Activated CD4-positive, alpha-beta T cell treated with anti-CD3 and anti-CD28 coated beads, Interleukin-2, amount 10 ng/mL, durations not matched to agents 24 days and 14 days (primary cell): ENCODE measurements at regions of chr1 and their contacts with region 1.

Region 1: DNA sequence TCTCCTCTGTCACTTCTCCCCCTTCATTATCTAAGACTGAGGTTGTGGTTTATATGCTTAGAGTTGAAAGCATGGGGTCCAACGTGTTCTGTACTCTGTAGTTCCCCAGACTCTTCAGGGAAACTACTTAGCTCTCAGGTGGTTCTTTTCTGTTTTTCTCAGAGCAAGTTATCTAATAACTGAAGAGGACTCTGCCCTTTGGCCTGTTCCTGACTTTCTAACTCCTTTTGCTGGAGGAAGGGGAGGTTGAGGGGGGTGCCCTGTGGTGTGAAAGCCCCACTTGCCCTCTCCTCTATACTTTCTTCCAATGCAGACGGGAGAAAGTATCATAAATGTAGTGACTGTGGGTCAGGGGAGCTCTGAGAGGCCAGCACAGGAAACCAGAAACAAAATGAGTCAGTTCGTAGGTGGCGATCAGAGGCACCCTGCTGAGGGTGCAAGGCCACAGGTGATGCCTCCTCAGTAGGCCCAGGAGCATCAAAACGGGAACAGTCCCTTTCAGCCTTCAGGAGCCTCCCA is 5.0 kb downstream of the SLC25A44 start:
- DNase-seq: peak; percentile 74
- H3K4me3 Mint-ChIP-seq: no peak overlapping the region
- H3K27ac Mint-ChIP-seq: peak overlapping the region; percentile 97
- H3K4me1 Mint-ChIP-seq: peaks cover 54% of the 10 kb centered on the region
- H3K27me3 Mint-ChIP-seq: no peaks in the 10 kb centered on the region

Region 2: DNA sequence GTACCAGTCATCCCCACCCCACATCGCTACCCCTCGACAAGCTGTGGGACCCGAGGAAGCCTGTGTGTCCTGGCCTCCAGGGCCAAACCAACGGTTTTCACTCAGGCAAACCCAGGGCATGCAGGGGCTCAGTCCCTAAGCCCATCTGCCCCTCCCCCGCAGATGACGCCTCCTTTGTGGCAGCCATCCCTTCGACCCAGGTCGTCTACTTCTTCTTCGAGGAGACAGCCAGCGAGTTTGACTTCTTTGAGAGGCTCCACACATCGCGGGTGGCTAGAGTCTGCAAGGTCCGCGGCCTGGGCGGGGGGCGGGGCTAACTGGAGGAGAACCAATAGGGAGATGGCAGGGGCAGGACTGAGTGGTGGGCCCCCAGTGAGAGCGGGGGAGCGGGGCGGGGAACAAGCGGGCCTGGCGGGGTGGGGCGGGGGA is 38.1 kb before region 1 on chr1:
- intact Hi-C with region 1: loop called (anchors 5 kb)
- DNase-seq: peak; percentile 86
- H3K4me3 Mint-ChIP-seq: peak overlapping the region; percentile 73
- H3K27ac Mint-ChIP-seq: peak overlapping the region; percentile 79
- H3K4me1 Mint-ChIP-seq: peaks cover 50% of the 10 kb centered on the region
- H3K27me3 Mint-ChIP-seq: no peaks in the 10 kb centered on the region

Region 3: GRCh38 chr1:156212833-156213643 is 14.1 kb after region 1 on chr1 and contains the start of gene PMF1:
- intact Hi-C with region 1: loop called (anchors 2 kb)
- DNase-seq: peak; percentile 98
- H3K4me3 Mint-ChIP-seq: peak within 1 kb of the TSS; percentile 98
- H3K27ac Mint-ChIP-seq: peak within 1 kb of the TSS; percentile 99
- H3K4me1 Mint-ChIP-seq: peaks cover 38% of the 10 kb centered on the region
- H3K27me3 Mint-ChIP-seq: no peaks in the 10 kb centered on the region
- total RNA-seq, gene PMF1: 107 and 113 TPM in 2 replicates

Region 4: DNA sequence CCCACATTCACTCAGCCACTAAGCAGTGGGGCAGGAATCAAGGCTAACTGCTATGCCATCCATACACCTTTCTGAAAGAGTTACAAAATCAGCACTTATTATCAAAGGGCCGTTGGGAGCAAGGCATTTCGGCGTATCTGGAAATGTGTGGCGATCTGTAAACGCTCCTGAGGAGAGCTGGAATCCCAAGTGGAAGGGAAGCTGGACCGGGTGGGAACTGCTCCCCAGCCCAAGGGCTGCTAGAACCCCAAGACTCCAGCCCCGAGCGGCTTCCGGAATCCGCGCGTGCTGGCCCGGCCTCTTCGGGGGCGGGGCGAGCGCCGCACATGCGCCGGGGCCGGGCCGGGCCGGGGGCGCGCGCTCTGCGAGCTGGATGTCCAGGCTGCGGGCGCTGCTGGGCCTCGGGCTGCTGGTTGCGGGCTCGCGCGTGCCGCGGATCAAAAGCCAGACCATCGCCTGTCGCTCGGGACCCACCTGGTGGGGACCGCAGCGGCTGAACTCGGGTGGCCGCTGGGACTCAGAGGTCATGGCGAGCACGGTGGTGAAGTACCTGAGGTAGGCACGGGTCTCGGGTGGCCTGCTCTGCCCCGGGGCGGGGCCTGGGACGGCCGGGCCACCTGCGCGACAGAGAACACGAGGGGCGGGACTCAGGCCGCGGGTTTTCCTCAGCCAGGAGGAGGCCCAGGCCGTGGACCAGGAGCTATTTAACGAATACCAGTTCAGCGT is 392.7 kb after region 1 on chr1 and contains the start of gene NAXE:
- intact Hi-C with region 1: no loop called
- DNase-seq: peak; percentile 94
- H3K4me3 Mint-ChIP-seq: peak within 1 kb of the TSS; percentile 86
- H3K27ac Mint-ChIP-seq: peak within 1 kb of the TSS; percentile 85
- H3K4me1 Mint-ChIP-seq: peaks cover 19% of the 10 kb centered on the region
- H3K27me3 Mint-ChIP-seq: no peaks in the 10 kb centered on the region
- total RNA-seq, gene NAXE: 84.1 and 90.2 TPM in 2 replicates

Region 5: DNA sequence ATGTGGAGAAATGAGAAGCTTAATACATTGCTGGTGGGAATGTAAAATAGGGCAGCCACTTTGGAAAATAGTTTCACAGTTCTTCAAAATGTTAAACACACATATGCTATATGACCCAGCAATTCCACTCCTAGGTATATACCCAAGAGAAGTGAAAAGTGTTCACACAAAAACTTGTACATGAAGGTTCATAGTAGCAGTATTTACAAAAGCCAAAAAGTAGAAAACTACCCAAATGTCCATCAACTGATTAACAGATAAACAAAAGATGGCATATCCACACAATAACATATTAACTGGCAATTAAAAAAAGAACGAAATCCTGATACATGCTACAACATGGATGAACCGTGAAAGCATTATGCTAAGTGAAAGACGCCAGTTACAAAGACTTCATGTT is 813.0 kb after region 1 on chr1:
- intact Hi-C with region 1: no loop called
- DNase-seq: no peak
- H3K4me3 Mint-ChIP-seq: no peak overlapping the region
- H3K27ac Mint-ChIP-seq: no peak overlapping the region
- H3K4me1 Mint-ChIP-seq: no peaks in the 10 kb centered on the region
- H3K27me3 Mint-ChIP-seq: peaks cover 38% of the 10 kb centered on the region